Calu3 (cell line): ENCODE measurements at regions of chr11 and their contacts with region 1.

Region 1: GRCh38 chr11:19951558-19952115 is 208.6 kb downstream of the DBX1 start:
- DNase-seq: peak; percentile 44
- H3K4me3 Mint-ChIP-seq: no peak overlapping the region
- H3K27ac Mint-ChIP-seq: no peak overlapping the region
- H3K4me1 Mint-ChIP-seq: peaks cover 38% of the 10 kb centered on the region
- H3K27me3 Mint-ChIP-seq: no peaks in the 10 kb centered on the region
- CTCF ChIP-seq: peak; percentile 24

Region 2: GRCh38 chr11:19903620-19904069 is 48.0 kb before region 1 on chr11:
- CTCF ChIA-PET with region 1: interaction called, 4 read pairs
- intact Hi-C with region 1: loop called (anchors 5 kb)
- DNase-seq: peak; percentile 81
- H3K4me3 Mint-ChIP-seq: no peak overlapping the region
- H3K27ac Mint-ChIP-seq: no peak overlapping the region
- H3K4me1 Mint-ChIP-seq: peaks cover 9% of the 10 kb centered on the region
- H3K27me3 Mint-ChIP-seq: no peaks in the 10 kb centered on the region
- CTCF ChIP-seq: peak; percentile 68

Region 3: GRCh38 chr11:19978668-19979518 is 27.3 kb after region 1 on chr11:
- CTCF ChIA-PET with region 1: no interaction called
- intact Hi-C with region 1: loop called (anchors 2 kb)
- DNase-seq: peak; percentile 61
- H3K4me3 Mint-ChIP-seq: peak overlapping the region; percentile 51
- H3K27ac Mint-ChIP-seq: peak overlapping the region; percentile 98
- H3K4me1 Mint-ChIP-seq: peaks cover 59% of the 10 kb centered on the region
- H3K27me3 Mint-ChIP-seq: no peaks in the 10 kb centered on the region
- CTCF ChIP-seq: no peak

Region 4: GRCh38 chr11:20002312-20003216 is 50.9 kb after region 1 on chr11:
- CTCF ChIA-PET with region 1: interaction called, 6 read pairs
- intact Hi-C with region 1: loop called (anchors 2 kb)
- DNase-seq: peak; percentile 71
- H3K4me3 Mint-ChIP-seq: peak overlapping the region; percentile 38
- H3K27ac Mint-ChIP-seq: peak overlapping the region; percentile 86
- H3K4me1 Mint-ChIP-seq: peaks cover 54% of the 10 kb centered on the region
- H3K27me3 Mint-ChIP-seq: no peaks in the 10 kb centered on the region
- CTCF ChIP-seq: no peak

Region 5: DNA sequence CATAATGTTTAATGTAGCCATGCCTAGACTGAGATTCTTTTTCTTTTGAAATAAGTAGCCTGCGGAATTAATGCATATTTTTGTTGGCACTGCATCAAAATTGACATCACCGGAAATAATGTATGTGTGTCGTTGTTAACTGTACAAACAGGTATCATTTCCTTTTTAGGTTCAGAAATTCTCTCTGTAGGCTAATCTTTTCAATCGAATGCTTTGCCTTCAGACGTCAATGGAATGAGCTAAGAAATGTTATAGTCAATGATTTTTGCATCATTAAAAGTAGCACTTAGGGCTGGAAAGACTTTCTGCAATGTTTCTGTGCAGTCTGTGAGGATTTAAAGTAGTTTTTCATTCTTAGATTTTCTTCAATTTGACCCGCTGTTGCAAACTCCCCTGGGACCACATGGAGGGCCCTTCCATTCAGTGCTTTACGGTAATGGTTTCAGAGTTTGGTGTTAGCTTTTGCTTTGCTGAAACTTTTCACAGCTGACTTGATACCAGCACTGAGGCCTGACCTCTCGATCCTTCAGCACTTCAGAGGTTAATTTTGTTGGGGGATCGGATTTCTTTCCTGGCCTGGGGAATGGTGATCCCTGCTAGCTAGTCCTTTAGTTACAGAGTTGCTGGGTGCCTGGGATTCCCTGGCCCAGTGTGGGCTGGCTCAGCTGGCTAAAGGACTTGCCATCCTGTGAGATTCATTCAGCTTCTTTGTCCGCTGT is 70.9 kb after region 1 on chr11:
- CTCF ChIA-PET with region 1: interaction called, 10 read pairs
- intact Hi-C with region 1: no loop called
- DNase-seq: peak; percentile 9
- H3K4me3 Mint-ChIP-seq: peak overlapping the region; percentile 64
- H3K27ac Mint-ChIP-seq: peak overlapping the region; percentile 5
- H3K4me1 Mint-ChIP-seq: peaks cover 34% of the 10 kb centered on the region
- H3K27me3 Mint-ChIP-seq: no peaks in the 10 kb centered on the region
- CTCF ChIP-seq: no peak